ENCODE measurements at regions of chr4 and their contacts with region 1.

Region 1: DNA sequence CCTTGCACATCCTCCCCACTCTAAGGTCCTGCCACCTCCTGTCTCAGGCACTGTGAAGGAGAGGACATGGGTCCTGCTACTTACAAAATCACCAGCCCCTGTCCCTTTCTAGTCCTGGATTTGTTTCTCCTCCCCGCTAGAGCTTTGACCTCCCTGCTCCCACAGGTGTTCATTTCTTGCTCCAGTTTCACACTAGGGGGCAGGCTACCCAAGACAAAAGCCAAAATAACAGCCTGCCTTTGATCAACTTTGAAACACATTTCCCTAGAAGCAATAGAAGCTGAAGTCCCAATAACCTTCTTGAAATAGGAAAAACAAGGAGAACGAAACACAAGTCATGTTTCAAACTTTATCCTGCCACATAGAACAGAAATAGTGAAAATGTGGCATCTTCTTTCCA is 164.4 kb downstream of the QDPR start:
- DNase-seq: peak; percentile 8
- H3K4me3 ChIP-seq: no peak overlapping the region
- H3K27ac ChIP-seq: no peak overlapping the region
- H3K4me1 ChIP-seq: no peaks in the 10 kb centered on the region
- H3K27me3 ChIP-seq: no peaks in the 10 kb centered on the region
- CTCF ChIP-seq: peak; percentile 51 to 57 (median 54)
- EP300 ChIP-seq: no peak
- POLR2A ChIP-seq: no peak

Region 2: GRCh38 chr4:17447675-17448298 is 100.3 kb after region 1 on chr4:
- intact Hi-C with region 1: loop called (anchors 5 kb)
- DNase-seq: no peak
- H3K4me3 ChIP-seq: no peak overlapping the region
- H3K27ac ChIP-seq: no peak overlapping the region
- H3K4me1 ChIP-seq: peaks cover 0 to 5% (median 2%) of the 10 kb centered on the region in 4 donors
- H3K27me3 ChIP-seq: no peaks in the 10 kb centered on the region
- CTCF ChIP-seq: peak; percentile 45 to 66 (median 52)
- EP300 ChIP-seq: no peak
- POLR2A ChIP-seq: no peak

Region 3: GRCh38 chr4:17469931-17470649 is 122.6 kb after region 1 on chr4:
- intact Hi-C with region 1: loop called (anchors 5 kb)
- DNase-seq: no peak
- H3K4me3 ChIP-seq: no peak overlapping the region
- H3K27ac ChIP-seq: no peak overlapping the region
- H3K4me1 ChIP-seq: no peaks in the 10 kb centered on the region
- H3K27me3 ChIP-seq: no peaks in the 10 kb centered on the region
- CTCF ChIP-seq: no peak
- EP300 ChIP-seq: no peak
- POLR2A ChIP-seq: no peak